ENCODE measurements at regions of chr1 and their contacts with region 1.

Region 1: GRCh38 chr1:158771950-158772866 is at the start of gene OR6N1:
- DNase-seq: no peak
- H3K4me3 ChIP-seq: no peak within 1 kb of the TSS
- H3K27ac ChIP-seq: no peak within 1 kb of the TSS
- H3K4me1 ChIP-seq: no peaks in the 10 kb centered on the region
- H3K27me3 ChIP-seq: no peaks in the 10 kb centered on the region
- CTCF ChIP-seq: no peak
- EP300 ChIP-seq: no peak
- POLR2A ChIP-seq: no peak
- total RNA-seq, gene OR6N1: not detected

Region 2: GRCh38 chr1:158952416-158952815 is 180.2 kb after region 1 on chr1:
- in situ Hi-C with region 1: no loop called
- intact Hi-C with region 1: no loop called
- DNase-seq: no peak
- H3K4me3 ChIP-seq: no peak overlapping the region
- H3K27ac ChIP-seq: no peak overlapping the region
- H3K4me1 ChIP-seq: no peaks in the 10 kb centered on the region
- H3K27me3 ChIP-seq: no peaks in the 10 kb centered on the region
- CTCF ChIP-seq: no peak
- EP300 ChIP-seq: no peak
- POLR2A ChIP-seq: no peak

Region 3: GRCh38 chr1:159970932-159971342 is 1198.7 kb after region 1 on chr1:
- in situ Hi-C with region 1: no loop called
- intact Hi-C with region 1: loop called (anchors 10 kb)
- DNase-seq: peak; percentile 88
- H3K4me3 ChIP-seq: no peak overlapping the region
- H3K27ac ChIP-seq: peak overlapping the region; percentile 53 to 67 (median 59)
- H3K4me1 ChIP-seq: peaks cover 11 to 27% (median 13%) of the 10 kb centered on the region in 4 donors
- H3K27me3 ChIP-seq: no peaks in the 10 kb centered on the region
- CTCF ChIP-seq: peak in 3 of 5 experiments; percentile 11 to 73 (median 49)
- EP300 ChIP-seq: no peak
- POLR2A ChIP-seq: no peak